Left ventricle myocardium superior (tissue), 1 donor: ENCODE measurements at regions of chr10 and their contacts with region 1.

Region 1: DNA sequence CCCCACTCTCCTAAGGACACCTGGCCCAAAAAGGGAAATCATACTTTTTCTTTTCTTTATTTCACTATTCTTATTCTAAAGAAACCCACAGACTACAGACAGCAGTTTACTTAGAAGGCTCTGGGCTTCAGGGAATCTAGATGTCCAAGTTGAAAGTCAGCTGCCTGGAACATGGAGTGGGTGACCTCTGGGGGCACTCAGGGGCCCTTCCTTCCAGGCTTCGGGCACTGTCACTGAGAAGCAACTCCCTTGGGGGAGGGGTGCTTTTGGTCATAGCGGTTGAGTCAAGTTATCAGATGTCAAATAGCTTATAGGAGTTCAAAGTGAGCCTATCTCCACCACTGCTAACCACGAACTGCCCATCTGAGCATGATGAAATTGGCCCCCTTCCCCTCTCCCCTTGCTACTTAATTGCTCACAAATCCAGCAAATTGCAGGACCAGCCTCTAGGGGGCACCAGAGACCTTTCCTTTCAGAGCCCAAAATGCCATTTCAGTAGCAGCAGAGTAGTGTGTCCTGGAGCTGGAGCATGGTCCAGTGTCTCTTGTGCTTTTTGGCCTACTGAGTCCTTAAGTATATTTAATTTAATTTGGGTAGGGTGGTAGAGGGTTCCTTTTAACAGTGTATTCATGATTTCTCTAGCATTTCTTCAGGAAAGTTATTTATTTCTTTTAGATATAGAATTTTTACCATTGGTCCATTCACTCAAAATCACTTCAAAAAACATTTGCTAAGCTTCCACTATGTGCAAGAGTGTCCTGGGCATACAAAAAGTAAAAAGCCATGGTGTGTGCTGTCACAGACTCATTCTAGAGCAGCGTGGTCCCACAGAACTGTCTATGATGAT is 463.8 kb downstream of the KCNMA1 start:
- DNase-seq: peak; percentile 71
- ATAC-seq: peak; percentile 72

Region 2: GRCh38 chr10:77641788-77642397 is 468.1 kb after region 1 on chr10:
- intact Hi-C with region 1: loop called (anchors 5 kb)
- DNase-seq: no peak
- ATAC-seq: peak; percentile 48